ENCODE measurements at regions of chr18 and their contacts with region 1.

Region 1: GRCh38 chr18:55220523-55220922 is 261.3 kb upstream of the CCDC68 start:
- DNase-seq: no peak
- ATAC-seq: peak in 2 of 4 donors; percentile 21 to 80
- H3K4me3 ChIP-seq: no peak overlapping the region
- H3K27ac ChIP-seq: peak overlapping the region in 9 of 12 donors; percentile 1 to 64 (median 29)
- H3K4me1 ChIP-seq: peaks cover 0 to 25% (median 10%) of the 10 kb centered on the region in 12 donors
- H3K27me3 ChIP-seq: no peaks in the 10 kb centered on the region
- CTCF ChIP-seq: no peak
- POLR2A ChIP-seq: no peak

Region 2: GRCh38 chr18:55096261-55096951 is 124.1 kb before region 1 on chr18:
- intact Hi-C with region 1: loop called in 2 of 10 experiments (anchors 5 to 10 kb)
- DNase-seq: peak in 4 of 5 donors; percentile 38 to 44 (median 41)
- ATAC-seq: peak; percentile 77 to 87 (median 80)
- H3K4me3 ChIP-seq: no peak overlapping the region
- H3K27ac ChIP-seq: no peak overlapping the region
- H3K4me1 ChIP-seq: peaks cover 0 to 15% (median 5%) of the 10 kb centered on the region in 12 donors
- H3K27me3 ChIP-seq: no peaks in the 10 kb centered on the region
- CTCF ChIP-seq: peak in 11 of 12 donors; percentile 23 to 59 (median 36)
- POLR2A ChIP-seq: no peak

Region 3: DNA sequence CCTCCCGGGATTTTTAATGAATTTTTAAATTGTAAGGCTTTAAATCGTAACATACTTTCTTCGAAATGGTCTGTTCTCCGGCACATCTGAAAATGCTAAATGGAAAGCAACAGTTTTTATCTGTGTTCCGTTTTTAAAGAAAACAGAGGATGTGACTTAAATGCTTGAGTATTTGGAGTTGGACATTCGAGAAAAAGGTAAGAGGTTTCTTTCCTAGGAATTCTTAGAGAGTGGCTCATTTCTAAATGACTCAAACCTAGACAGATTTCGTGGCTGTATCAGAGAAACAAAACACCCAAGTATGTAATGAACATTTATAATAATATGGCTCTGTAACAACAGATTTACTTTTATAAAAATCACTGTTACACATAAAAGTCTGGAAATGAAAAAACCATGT is 83.7 kb before region 1 on chr18:
- intact Hi-C with region 1: no loop called
- DNase-seq: no peak
- ATAC-seq: no peak
- H3K4me3 ChIP-seq: no peak overlapping the region
- H3K27ac ChIP-seq: no peak overlapping the region
- H3K4me1 ChIP-seq: no peaks in the 10 kb centered on the region
- H3K27me3 ChIP-seq: no peaks in the 10 kb centered on the region
- CTCF ChIP-seq: no peak
- POLR2A ChIP-seq: no peak

Region 4: DNA sequence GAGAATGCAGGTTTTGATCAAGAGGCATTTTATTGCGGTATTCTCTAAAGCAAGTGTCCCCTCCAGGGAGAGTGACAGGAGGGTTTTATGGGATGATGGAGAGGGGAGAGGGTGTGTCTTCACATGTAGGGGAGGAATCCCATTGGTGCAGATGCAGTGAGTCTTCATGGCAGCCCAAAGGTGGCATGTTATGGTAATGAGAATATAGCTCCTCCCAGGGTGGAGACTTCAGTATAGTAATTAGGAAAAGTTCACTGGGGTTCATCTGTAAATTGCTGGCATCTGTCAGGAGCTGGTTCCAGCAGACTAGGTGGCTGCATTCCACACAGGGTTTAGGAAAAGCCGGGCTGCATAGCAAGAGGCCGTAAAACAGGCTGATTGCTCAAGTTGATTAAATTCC is 30.6 kb before region 1 on chr18:
- intact Hi-C with region 1: no loop called
- DNase-seq: no peak
- ATAC-seq: no peak
- H3K4me3 ChIP-seq: no peak overlapping the region
- H3K27ac ChIP-seq: no peak overlapping the region
- H3K4me1 ChIP-seq: no peaks in the 10 kb centered on the region
- H3K27me3 ChIP-seq: no peaks in the 10 kb centered on the region
- CTCF ChIP-seq: no peak
- POLR2A ChIP-seq: no peak

Region 5: GRCh38 chr18:55251254-55251971 is 30.9 kb after region 1 on chr18:
- intact Hi-C with region 1: no loop called
- DNase-seq: peak in 2 of 5 donors; percentile 33 to 36
- ATAC-seq: peak in 2 of 4 donors; percentile 72 to 84
- H3K4me3 ChIP-seq: peak overlapping the region in 2 of 12 donors; percentile 17 to 40
- H3K27ac ChIP-seq: peak overlapping the region in 11 of 12 donors; percentile 45 to 79 (median 65)
- H3K4me1 ChIP-seq: peaks cover 0 to 65% (median 43%) of the 10 kb centered on the region in 12 donors
- H3K27me3 ChIP-seq: no peaks in the 10 kb centered on the region
- CTCF ChIP-seq: no peak
- POLR2A ChIP-seq: no peak

Measured in heart left ventricle (tissue), 16 donors.